Activated CD4-positive, alpha-beta memory T cell treated with anti-CD3 and anti-CD28 coated beads for 36 hours (primary cell): ENCODE measurements at regions of chr9 and their contacts with region 1.

Region 1: DNA sequence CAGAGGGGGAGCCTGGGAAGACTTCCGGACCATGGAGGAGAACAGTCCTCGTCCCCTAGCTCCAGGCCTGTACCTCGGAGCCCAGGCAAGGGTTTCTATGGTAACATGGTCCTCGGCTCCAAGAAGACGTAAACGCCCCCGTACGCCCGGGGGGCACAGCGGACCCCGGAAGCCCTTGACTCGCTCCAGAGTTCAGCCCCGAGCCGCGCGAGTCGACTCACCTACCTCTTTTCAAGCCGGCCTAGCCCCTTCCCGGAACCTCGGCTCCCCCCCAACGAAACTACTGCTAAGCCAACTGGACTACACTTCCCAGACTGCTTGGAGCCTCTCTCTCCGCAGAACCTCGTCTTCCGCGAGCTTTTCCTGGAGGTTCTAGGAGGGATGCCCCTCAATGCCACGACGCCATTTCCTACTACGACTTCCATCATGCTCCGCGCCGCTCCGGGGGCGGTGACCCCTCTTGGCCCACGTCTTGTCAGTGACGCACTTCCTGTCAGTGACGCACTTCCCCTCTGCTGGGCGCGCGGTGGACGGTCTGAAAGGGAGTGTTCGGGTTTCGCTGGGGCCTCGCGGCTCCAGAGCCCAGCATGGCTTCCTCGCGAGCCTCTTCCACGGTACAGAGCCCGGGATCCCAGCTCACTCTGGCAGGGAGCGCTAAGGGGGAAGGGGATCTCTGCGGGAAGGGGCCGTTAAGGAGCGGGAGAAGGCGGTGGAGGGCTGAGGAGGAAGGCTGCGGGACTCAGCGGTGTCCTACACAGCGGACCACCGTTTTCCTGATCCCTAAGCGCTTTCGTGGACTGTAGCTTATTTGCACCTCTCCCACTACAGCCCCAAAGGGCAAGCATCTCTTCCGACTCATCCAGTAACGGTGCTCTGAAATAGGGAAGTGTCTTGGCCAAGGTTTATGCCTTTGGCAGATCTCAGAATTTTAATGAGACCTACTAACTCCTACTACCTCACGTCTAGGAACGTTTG is at the starts of genes CDC26 and PRPF4:
- DNase-seq: peak; percentile 97
- H3K4me3 Mint-ChIP-seq: no peak within 1 kb of the TSS
- H3K27ac Mint-ChIP-seq: no peak within 1 kb of the TSS
- H3K4me1 Mint-ChIP-seq: peaks cover 35% of the 10 kb centered on the region
- H3K27me3 Mint-ChIP-seq: no peaks in the 10 kb centered on the region
- total RNA-seq, gene CDC26: 49.8 to 50.9 TPM
- total RNA-seq, gene PRPF4: 47.6 to 48.7 TPM

Region 2: GRCh38 chr9:113155911-113156588 is 119.4 kb before region 1 on chr9:
- CTCF ChIA-PET with region 1: interaction called, 12 read pairs
- POLR2A ChIA-PET with region 1: no interaction called
- intact Hi-C with region 1: loop called (anchors 2 kb)
- DNase-seq: peak; percentile 77
- H3K4me3 Mint-ChIP-seq: peak overlapping the region; percentile 2
- H3K27ac Mint-ChIP-seq: peak overlapping the region; percentile 75
- H3K4me1 Mint-ChIP-seq: peaks cover 38% of the 10 kb centered on the region
- H3K27me3 Mint-ChIP-seq: no peaks in the 10 kb centered on the region

Region 3: DNA sequence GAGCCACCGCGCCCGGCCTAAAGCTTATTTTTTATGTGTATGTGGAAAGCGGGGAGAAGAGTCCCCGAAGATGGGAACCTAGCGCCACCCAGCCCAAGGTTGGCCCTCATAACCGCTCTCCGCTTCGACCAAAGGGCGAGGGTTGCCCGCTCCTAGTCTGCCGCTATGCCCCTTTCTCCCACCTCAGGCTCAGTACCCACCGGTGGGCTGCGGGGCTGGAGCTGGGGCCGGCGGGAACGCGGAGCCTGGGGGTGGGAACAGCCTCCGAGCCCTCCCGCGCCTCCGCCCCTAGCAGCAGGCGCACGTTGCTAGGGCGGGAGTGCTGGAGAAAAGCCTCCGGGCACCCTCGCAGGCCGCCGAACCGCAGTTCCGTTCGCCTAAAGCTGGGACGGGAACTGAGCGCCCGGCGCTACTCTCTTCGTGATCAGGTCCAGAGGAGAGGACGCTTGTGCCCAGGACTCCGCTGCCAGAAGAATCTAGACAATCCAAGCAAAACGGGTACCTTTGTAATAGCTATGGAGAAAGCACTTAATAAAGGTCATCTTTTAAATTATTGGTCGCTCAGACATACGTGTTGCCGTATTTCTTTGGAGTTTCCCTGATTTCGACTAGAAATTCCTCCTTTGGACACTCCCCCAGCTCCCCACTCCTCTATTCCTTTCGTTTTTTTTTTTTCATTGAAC is 64.7 kb after region 1 on chr9 and contains the start of gene WDR31:
- CTCF ChIA-PET with region 1: interaction called, 11 read pairs
- POLR2A ChIA-PET with region 1: no interaction called
- intact Hi-C with region 1: loop called (anchors 2 kb)
- DNase-seq: peak; percentile 88
- H3K4me3 Mint-ChIP-seq: peak within 1 kb of the TSS; percentile 72
- H3K27ac Mint-ChIP-seq: no peak within 1 kb of the TSS
- H3K4me1 Mint-ChIP-seq: peaks cover 27% of the 10 kb centered on the region
- H3K27me3 Mint-ChIP-seq: no peaks in the 10 kb centered on the region
- total RNA-seq, gene WDR31: 1.6 to 2.4 TPM

Region 4: DNA sequence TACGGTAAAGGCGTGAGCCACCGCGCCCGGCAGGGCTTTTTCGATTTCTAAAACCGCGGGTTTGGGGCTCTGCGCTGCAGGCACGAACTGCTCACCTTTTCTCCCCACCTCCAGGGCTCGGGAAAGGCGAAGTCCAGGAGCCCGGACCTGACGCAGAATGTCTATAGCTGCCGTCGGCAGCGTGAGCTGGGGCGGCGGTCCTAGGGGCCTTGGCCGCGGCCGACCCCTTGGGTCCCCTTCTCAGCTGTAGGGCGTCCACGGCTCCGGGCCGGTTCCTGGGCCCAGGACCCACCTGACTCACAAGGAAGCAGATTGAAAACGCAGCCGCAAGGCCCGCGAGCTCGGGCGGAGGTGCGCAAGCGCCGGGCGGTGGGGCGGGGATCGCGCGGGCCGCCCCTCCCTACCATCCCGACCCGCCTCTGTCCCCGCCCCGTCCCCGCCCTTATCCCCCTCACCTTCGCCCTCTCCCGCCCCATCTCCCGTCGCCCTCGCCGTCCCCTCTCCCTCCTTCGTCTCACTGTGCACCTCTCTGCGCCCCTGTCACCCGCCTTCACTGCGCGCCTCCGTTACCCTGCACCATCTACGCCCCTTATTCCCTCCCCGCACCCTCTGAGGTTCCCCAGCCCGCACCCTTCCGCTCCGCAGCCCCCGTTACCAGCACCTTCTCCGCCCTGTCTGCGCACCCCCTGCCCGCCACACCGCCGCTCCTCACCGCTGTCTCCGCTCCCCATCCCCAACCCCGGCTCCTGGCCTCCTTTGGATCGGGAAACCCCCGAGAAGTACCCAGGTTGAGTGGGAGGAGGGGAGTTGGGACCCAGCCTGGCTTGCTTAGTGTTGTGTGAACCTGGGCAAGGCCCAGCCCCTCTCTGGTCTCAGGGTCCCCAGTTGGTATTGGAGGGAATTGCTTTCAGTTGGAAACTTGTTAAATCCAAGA is 101.5 kb after region 1 on chr9 and contains the start of gene HDHD3:
- CTCF ChIA-PET with region 1: interaction called, 5 read pairs
- POLR2A ChIA-PET with region 1: interaction called, 5 read pairs
- intact Hi-C with region 1: loop called (anchors 1 kb)
- DNase-seq: peak; percentile 89
- H3K4me3 Mint-ChIP-seq: peak within 1 kb of the TSS; percentile 80
- H3K27ac Mint-ChIP-seq: peak within 1 kb of the TSS; percentile 81
- H3K4me1 Mint-ChIP-seq: peaks cover 17% of the 10 kb centered on the region
- H3K27me3 Mint-ChIP-seq: no peaks in the 10 kb centered on the region
- total RNA-seq, gene HDHD3: 17.2 to 17.7 TPM

Region 5: DNA sequence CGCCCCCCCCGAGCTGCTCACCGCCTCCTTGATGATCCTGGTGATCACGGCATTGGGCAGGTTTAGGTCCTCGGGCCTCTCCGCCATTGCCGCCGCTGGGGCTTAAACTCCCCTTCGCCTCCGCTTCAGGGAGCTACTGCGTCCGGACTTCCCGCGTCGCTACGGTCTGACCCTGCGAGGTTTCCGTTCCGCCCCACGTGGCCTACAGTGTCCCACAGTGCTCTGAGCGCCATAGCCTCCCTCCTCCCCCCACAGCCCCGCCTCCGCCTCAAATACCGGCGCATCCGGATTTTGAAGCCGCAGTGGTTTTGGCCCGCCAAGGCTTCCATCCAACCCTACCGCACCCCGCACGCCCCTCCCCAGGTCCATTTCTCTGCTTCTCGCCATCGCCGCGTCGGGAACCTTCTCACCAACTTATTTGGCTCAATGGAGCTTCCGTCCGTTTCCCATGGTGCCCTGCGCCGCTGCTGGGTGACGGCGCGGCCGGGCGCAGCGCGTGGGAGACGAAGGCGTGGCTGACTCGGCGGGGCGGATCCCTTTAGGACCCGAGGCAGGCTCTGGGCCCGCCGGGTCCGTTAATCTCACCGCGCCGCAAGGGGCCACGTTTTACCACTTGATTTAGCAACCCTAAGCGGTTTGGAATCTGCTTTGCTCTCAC is 134.9 kb after region 1 on chr9 and contains the starts of genes C9orf43 and POLE3:
- CTCF ChIA-PET with region 1: interaction called, 34 read pairs
- POLR2A ChIA-PET with region 1: interaction called, 26 read pairs
- intact Hi-C with region 1: loop called (anchors 1 kb)
- DNase-seq: peak; percentile 97
- H3K4me3 Mint-ChIP-seq: peak within 1 kb of the TSS; percentile 98
- H3K27ac Mint-ChIP-seq: peak within 1 kb of the TSS; percentile 100
- H3K4me1 Mint-ChIP-seq: peaks cover 36% of the 10 kb centered on the region
- H3K27me3 Mint-ChIP-seq: no peaks in the 10 kb centered on the region
- total RNA-seq, gene C9orf43: 0.65 to 0.81 TPM
- total RNA-seq, gene POLE3: 44.3 to 45.0 TPM

Region 6: DNA sequence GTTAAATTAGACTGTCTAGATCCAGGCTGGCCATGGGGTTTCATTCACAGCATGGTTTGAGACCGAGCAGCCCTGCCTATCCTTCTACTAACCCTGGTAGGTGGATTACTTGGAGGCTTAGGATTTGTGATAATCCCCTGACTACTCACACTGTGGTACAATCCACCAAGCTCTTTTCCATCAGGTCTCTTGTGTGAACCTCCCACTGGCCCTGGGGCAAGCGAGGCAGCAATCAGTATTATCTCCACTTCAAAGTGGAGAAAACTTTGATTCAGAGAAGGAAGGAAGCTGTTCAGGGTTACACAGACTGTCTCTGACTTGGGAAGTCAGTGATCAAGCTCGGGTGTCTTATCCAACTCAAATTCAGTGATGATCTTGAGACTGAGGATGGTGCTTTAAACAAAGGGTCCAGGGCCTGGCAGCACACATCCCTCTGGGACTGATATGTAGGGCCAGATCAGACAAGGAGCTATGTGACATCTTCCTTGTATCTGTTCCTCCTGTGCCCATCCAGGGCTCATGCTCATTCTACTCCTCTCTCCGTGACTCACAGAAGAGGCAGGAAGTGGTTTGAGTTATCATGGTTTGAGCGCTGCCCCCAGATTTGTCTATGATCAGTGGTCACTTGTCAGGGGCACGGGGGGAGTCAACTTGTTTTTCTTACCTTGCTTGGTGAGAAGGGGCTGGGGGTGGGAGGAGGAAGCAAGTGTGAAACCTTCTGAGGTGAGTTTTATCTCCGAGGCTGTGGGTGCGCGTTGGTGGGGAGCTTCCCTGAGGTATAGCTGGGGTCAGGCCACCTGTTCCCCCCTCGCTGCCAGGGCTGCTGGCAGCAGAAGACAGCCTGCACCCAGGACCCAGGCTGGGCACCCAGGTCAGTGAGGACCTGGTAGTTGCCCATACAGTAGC is 236.7 kb after region 1 on chr9:
- CTCF ChIA-PET with region 1: interaction called, 7 read pairs
- POLR2A ChIA-PET with region 1: interaction called, 4 read pairs
- intact Hi-C with region 1: loop called (anchors 10 kb)
- DNase-seq: peak; percentile 89
- H3K4me3 Mint-ChIP-seq: peak overlapping the region; percentile 52
- H3K27ac Mint-ChIP-seq: peak overlapping the region; percentile 91
- H3K4me1 Mint-ChIP-seq: peaks cover 52% of the 10 kb centered on the region
- H3K27me3 Mint-ChIP-seq: peaks cover 2% of the 10 kb centered on the region